Natural killer cell (primary cell): ENCODE measurements at regions of chr2 and their contacts with region 1.

Region 1: GRCh38 chr2:64330281-64331113 is 123.5 kb upstream of the LGALSL start:
- DNase-seq: peak; percentile 65 to 93
- ATAC-seq: peak; percentile 10 to 50 (median 36)
- H3K4me3 ChIP-seq: no peak overlapping the region
- H3K4me3 Mint-ChIP-seq: peak overlapping the region; percentile 70
- H3K27ac ChIP-seq: no peak overlapping the region
- H3K27ac Mint-ChIP-seq: peak overlapping the region in 1 of 2 donors; percentile 54
- H3K4me1 ChIP-seq: peaks cover 36% of the 10 kb centered on the region
- H3K4me1 Mint-ChIP-seq: peaks cover 36 to 38% of the 10 kb centered on the region in 2 donors
- H3K27me3 ChIP-seq: no peaks in the 10 kb centered on the region
- H3K27me3 Mint-ChIP-seq: peaks cover 0 to 2% of the 10 kb centered on the region in 2 donors
- CTCF ChIP-seq: peak; percentile 89

Region 2: DNA sequence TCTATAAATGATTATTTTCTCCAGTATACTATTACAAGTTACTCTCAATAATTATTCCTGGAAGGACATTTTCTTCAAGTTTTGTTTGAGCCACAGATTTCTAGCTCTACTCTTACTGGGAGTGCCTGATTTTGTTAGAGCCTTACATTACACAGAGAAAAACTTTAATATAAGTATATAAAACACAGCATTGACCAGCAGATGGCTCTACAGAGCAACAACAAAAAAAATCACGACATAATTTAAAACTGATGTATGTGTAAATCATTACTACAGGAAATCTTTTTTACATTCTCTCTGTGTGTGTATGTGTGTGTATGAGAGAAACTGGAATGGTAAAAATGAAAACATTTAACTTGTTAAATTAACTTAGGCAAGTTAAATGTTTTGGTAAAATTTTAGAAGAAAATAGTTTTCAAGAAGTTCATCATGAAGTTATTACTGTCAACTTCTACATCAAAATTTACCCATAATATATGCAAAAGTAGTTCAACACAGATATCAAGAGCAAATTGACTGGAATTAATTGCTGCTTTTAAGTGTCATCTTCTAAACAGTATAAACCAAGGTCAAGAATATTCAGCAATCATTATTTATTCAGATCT is 638.4 kb before region 1 on chr2:
- intact Hi-C with region 1: loop called (anchors 5 kb)
- DNase-seq: peak in 1 of 2 donors; percentile 70
- ATAC-seq: peak; percentile 44 to 66 (median 63)
- H3K4me3 ChIP-seq: no peak overlapping the region
- H3K4me3 Mint-ChIP-seq: no peak overlapping the region
- H3K27ac ChIP-seq: no peak overlapping the region
- H3K27ac Mint-ChIP-seq: no peak overlapping the region
- H3K4me1 ChIP-seq: no peaks in the 10 kb centered on the region
- H3K4me1 Mint-ChIP-seq: no peaks in the 10 kb centered on the region
- H3K27me3 ChIP-seq: no peaks in the 10 kb centered on the region
- H3K27me3 Mint-ChIP-seq: no peaks in the 10 kb centered on the region
- CTCF ChIP-seq: peak; percentile 77

Region 3: GRCh38 chr2:64144057-64145013 is 186.2 kb before region 1 on chr2 and contains the start of gene PELI1:
- intact Hi-C with region 1: loop called (anchors 1 kb)
- DNase-seq: peak; percentile 81 to 95
- ATAC-seq: peak; percentile 96 to 99 (median 97)
- H3K4me3 ChIP-seq: peak within 1 kb of the TSS; percentile 77
- H3K4me3 Mint-ChIP-seq: peak within 1 kb of the TSS; percentile 97
- H3K27ac ChIP-seq: peak within 1 kb of the TSS; percentile 85
- H3K27ac Mint-ChIP-seq: peak within 1 kb of the TSS; percentile 89 to 95
- H3K4me1 ChIP-seq: peaks cover 3% of the 10 kb centered on the region
- H3K4me1 Mint-ChIP-seq: peaks cover 21 to 31% of the 10 kb centered on the region in 2 donors
- H3K27me3 ChIP-seq: no peaks in the 10 kb centered on the region
- H3K27me3 Mint-ChIP-seq: no peaks in the 10 kb centered on the region
- CTCF ChIP-seq: peak; percentile 36
- total RNA-seq, gene PELI1: 42.3 to 141 (median 65.0) TPM

Region 4: DNA sequence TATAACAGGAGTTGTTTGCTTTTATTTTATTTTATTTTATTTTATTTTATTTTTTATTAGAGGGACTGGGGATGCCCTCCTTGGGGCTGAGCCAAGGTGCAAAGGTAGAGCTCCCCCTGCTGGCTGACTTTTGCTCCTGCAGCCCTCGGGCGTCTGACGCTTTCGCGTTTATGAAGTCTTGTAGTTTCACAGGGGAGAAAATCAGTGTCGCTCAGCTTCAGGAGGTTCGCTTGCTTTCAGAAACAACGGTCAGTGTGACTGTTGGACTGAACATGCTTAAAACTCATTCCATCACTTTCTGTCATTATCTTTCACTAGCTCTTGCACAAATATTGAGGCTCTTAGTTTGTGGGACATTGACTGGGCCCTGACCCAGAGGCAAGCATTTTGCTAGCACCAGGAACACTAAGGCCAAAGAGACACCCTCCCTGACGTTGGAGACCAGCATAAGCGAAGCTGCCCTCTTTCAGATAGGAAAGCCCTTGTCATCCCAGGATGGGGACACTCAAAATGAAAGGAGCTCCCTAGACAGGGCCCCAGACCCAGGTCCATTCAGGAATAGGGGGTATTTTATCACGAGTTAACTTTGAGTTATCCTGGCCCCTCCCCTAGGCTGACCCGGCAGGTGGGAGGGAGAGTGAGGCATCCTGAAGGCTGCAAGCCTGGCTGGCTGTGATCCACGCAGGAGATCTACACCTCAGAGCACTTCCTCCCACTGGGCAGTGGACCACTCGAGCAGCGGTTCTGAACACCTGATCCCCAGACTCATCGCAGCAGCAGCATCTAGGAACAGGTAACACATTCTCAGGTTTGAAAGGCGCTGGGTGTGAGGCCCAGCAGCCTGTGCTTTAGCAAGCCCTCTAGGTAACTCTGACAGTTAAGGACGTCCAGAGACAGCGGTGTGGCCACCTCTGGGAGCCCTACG is 157.8 kb after region 1 on chr2:
- intact Hi-C with region 1: loop called (anchors 1 kb)
- DNase-seq: peak; percentile 68 to 88
- ATAC-seq: peak; percentile 79 to 93 (median 91)
- H3K4me3 ChIP-seq: no peak overlapping the region
- H3K4me3 Mint-ChIP-seq: no peak overlapping the region
- H3K27ac ChIP-seq: no peak overlapping the region
- H3K27ac Mint-ChIP-seq: no peak overlapping the region
- H3K4me1 ChIP-seq: peaks cover 7% of the 10 kb centered on the region
- H3K4me1 Mint-ChIP-seq: peaks cover 0 to 5% of the 10 kb centered on the region in 2 donors
- H3K27me3 ChIP-seq: no peaks in the 10 kb centered on the region
- H3K27me3 Mint-ChIP-seq: peaks cover under 1 to 15% of the 10 kb centered on the region in 2 donors
- CTCF ChIP-seq: peak; percentile 96

Region 5: DNA sequence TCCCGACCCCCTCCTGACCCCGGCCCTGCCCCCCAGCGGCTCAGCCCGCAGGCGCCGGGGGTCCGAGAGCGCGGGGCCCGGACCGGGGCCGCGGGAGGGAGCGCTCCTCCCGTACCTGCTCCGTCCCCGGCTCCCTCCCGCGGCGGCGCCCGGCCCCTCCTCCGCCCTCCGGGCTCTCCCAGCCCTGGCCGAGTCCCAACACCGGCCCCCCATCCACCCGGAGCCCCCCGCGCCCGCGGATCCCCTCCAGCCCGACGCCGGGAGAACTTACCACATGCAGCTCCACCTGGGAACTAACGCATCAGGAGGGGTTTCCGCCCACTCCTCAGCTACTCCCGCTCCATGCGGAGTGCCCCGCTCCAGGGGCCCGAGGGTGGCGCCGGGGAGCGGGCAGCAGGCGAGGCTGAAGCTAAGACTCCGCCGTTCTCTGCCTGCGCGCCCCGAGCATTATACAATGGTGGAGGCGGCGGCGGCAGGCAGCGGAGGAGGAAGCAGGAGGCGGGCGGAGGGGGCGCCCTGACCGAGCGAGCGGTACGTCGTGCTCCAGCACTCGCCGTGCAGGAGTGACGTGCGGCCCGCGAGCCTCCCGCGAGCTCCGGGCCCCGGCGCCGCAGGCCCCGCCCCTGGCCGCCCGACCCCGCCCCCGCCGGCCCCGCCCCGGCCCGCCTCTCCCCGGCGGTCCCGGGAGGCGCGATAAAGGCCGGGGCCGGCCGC is 323.0 kb after region 1 on chr2 and contains the start of gene SERTAD2:
- intact Hi-C with region 1: loop called (anchors 5 kb)
- DNase-seq: peak; percentile 80 to 94
- ATAC-seq: peak; percentile 81 to 93 (median 87)
- H3K4me3 ChIP-seq: peak within 1 kb of the TSS; percentile 99
- H3K4me3 Mint-ChIP-seq: peak within 1 kb of the TSS; percentile 93
- H3K27ac ChIP-seq: peak within 1 kb of the TSS; percentile 98
- H3K27ac Mint-ChIP-seq: peak within 1 kb of the TSS; percentile 85 to 87
- H3K4me1 ChIP-seq: peaks cover 28% of the 10 kb centered on the region
- H3K4me1 Mint-ChIP-seq: peaks cover 34 to 40% of the 10 kb centered on the region in 2 donors
- H3K27me3 ChIP-seq: no peaks in the 10 kb centered on the region
- H3K27me3 Mint-ChIP-seq: no peaks in the 10 kb centered on the region
- CTCF ChIP-seq: no peak
- total RNA-seq, gene SERTAD2: 45.6 to 71.2 (median 55.8) TPM

Region 6: GRCh38 chr2:64988420-64989125 is 658.1 kb after region 1 on chr2:
- intact Hi-C with region 1: loop called (anchors 1 kb)
- DNase-seq: peak; percentile 40 to 79
- ATAC-seq: peak; percentile 48 to 64 (median 51)
- H3K4me3 ChIP-seq: peak overlapping the region; percentile 73
- H3K4me3 Mint-ChIP-seq: peak overlapping the region; percentile 84
- H3K27ac ChIP-seq: peak overlapping the region; percentile 78
- H3K27ac Mint-ChIP-seq: peak overlapping the region; percentile 37 to 63
- H3K4me1 ChIP-seq: peaks cover 23% of the 10 kb centered on the region
- H3K4me1 Mint-ChIP-seq: peaks cover 35 to 42% of the 10 kb centered on the region in 2 donors
- H3K27me3 ChIP-seq: no peaks in the 10 kb centered on the region
- H3K27me3 Mint-ChIP-seq: no peaks in the 10 kb centered on the region
- CTCF ChIP-seq: peak; percentile 28